CD4-positive, alpha-beta T cell (primary cell): ENCODE measurements at regions of chr6 and their contacts with region 1.

Region 1: GRCh38 chr6:30541515-30542403 is 14.5 kb downstream of the GNL1 start:
- DNase-seq: peak; percentile 69 to 93 (median 76)
- ATAC-seq: peak; percentile 68
- H3K4me3 ChIP-seq: peak overlapping the region; percentile 53
- H3K4me3 Mint-ChIP-seq: peak overlapping the region; percentile 86
- H3K27ac ChIP-seq: peak overlapping the region; percentile 52 to 68
- H3K27ac Mint-ChIP-seq: peak overlapping the region; percentile 91
- H3K4me1 ChIP-seq: peaks cover 33% of the 10 kb centered on the region
- H3K4me1 Mint-ChIP-seq: peaks cover 36% of the 10 kb centered on the region
- H3K27me3 ChIP-seq: no peaks in the 10 kb centered on the region
- H3K27me3 Mint-ChIP-seq: no peaks in the 10 kb centered on the region
- CTCF ChIP-seq: peak; percentile 98

Region 2: DNA sequence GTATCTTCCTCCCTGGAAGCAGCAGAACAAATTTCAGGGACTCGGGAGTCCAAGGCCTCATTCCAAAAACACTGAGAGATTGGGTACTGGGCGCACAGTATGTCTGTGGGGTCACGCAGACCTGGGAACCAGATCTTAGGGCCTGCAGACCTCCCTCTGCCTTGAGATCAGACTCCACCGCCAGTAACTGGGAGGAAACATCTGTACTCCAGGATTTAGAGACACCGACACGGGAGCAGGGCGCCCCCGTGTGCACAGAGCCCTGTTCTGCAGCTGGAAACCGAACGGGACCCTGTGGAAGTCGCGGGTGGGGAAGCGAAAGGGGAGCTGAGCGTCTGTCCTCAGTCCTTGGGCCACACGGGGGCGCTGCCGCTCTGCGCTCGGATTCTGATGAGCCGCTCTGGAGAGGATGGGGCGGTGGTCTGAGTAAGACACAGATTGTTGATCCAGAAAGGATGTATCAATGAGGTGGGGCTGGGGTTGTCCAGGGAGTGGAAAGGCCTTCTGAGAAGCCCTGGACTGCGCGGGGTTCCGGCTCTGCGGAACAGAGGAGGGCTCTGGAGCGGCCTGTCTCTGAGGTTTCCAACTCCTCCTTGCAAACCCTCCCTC is 88.1 kb before region 1 on chr6:
- CTCF ChIA-PET with region 1: interaction called, 14 read pairs
- POLR2A ChIA-PET with region 1: interaction called, 6 read pairs
- intact Hi-C with region 1: no loop called
- DNase-seq: peak; percentile 77 to 95 (median 86)
- ATAC-seq: peak; percentile 76
- H3K4me3 ChIP-seq: peak overlapping the region; percentile 22
- H3K4me3 Mint-ChIP-seq: peak overlapping the region; percentile 67
- H3K27ac ChIP-seq: no peak overlapping the region
- H3K27ac Mint-ChIP-seq: no peak overlapping the region
- H3K4me1 ChIP-seq: peaks cover 44% of the 10 kb centered on the region
- H3K4me1 Mint-ChIP-seq: peaks cover 49% of the 10 kb centered on the region
- H3K27me3 ChIP-seq: peaks cover 64 to 78% of the 10 kb centered on the region in 2 experiments
- H3K27me3 Mint-ChIP-seq: peaks cover 91% of the 10 kb centered on the region
- CTCF ChIP-seq: peak; percentile 56

Region 3: GRCh38 chr6:30489081-30490025 is 52.4 kb before region 1 on chr6 and contains the start of gene HLA-E:
- CTCF ChIA-PET with region 1: interaction called, 144 read pairs
- POLR2A ChIA-PET with region 1: interaction called, 120 read pairs
- intact Hi-C with region 1: no loop called
- DNase-seq: peak; percentile 74 to 99 (median 88)
- ATAC-seq: peak; percentile 80
- H3K4me3 ChIP-seq: peak within 1 kb of the TSS; percentile 83
- H3K4me3 Mint-ChIP-seq: peak within 1 kb of the TSS; percentile 100
- H3K27ac ChIP-seq: peak within 1 kb of the TSS; percentile 95 to 96
- H3K27ac Mint-ChIP-seq: peak within 1 kb of the TSS; percentile 98
- H3K4me1 ChIP-seq: peaks cover 59% of the 10 kb centered on the region
- H3K4me1 Mint-ChIP-seq: peaks cover 62% of the 10 kb centered on the region
- H3K27me3 ChIP-seq: no peaks in the 10 kb centered on the region
- H3K27me3 Mint-ChIP-seq: no peaks in the 10 kb centered on the region
- CTCF ChIP-seq: no peak
- total RNA-seq, gene HLA-E: 1,136 to 1,173 TPM

Region 4: DNA sequence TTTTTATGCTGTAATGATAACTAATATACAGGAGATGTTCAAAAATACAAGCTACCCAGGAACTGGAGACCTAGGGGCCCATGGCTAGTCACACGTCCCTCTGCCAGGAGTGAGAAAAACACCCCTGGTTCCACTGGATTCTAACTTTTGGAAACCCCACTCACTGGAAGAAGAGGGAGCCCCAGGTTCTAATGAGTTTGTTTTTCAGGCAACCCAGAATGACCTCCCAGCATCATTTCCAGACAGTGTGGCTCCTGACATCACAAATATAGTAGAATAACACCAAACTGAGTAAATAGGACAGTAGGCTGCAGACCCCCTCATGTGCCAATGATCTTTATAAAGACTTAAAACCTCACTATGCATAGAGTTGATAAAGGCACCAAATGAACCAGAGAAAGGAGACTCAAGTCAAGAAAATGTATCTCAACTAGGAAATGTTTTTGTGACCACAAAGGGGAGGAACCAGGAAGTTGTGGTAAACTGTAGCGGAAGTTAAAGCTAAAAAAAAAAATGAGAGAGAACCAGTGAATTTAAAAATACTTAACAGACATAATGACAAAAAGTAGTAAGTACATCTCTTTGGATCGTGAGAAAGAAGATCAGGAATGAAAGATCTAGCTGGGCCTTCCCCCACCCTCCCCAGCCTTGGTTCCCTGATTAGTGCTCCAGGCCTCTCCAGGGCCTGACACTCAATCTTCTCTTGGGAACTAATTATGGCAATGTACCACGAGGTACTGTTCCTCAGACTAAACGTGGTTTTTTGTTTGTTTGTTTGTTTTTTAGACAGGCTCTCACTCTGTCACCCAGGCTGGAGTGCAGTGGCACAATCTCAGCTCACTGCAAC is 32.6 kb before region 1 on chr6:
- CTCF ChIA-PET with region 1: interaction called, 27 read pairs
- POLR2A ChIA-PET with region 1: interaction called, 17 read pairs
- intact Hi-C with region 1: no loop called
- DNase-seq: peak in 3 of 14 experiments; percentile 84 to 88 (median 86)
- ATAC-seq: peak; percentile 85
- H3K4me3 ChIP-seq: peak overlapping the region; percentile 36
- H3K4me3 Mint-ChIP-seq: peak overlapping the region; percentile 72
- H3K27ac ChIP-seq: peak overlapping the region; percentile 47 to 65
- H3K27ac Mint-ChIP-seq: peak overlapping the region; percentile 79
- H3K4me1 ChIP-seq: peaks cover 75% of the 10 kb centered on the region
- H3K4me1 Mint-ChIP-seq: peaks cover 62% of the 10 kb centered on the region
- H3K27me3 ChIP-seq: no peaks in the 10 kb centered on the region
- H3K27me3 Mint-ChIP-seq: no peaks in the 10 kb centered on the region
- CTCF ChIP-seq: no peak

Region 5: GRCh38 chr6:30556066-30556905 is 14.5 kb after region 1 on chr6 and contains the start of gene GNL1:
- CTCF ChIA-PET with region 1: interaction called, 26 read pairs
- POLR2A ChIA-PET with region 1: interaction called, 83 read pairs
- intact Hi-C with region 1: loop called in 1 of 2 experiments (anchors 2 kb)
- DNase-seq: peak; percentile 98 to 100 (median 99)
- ATAC-seq: peak; percentile 88
- H3K4me3 ChIP-seq: peak within 1 kb of the TSS; percentile 86
- H3K4me3 Mint-ChIP-seq: peak within 1 kb of the TSS; percentile 98
- H3K27ac ChIP-seq: peak within 1 kb of the TSS; percentile 94 to 97
- H3K27ac Mint-ChIP-seq: peak within 1 kb of the TSS; percentile 97
- H3K4me1 ChIP-seq: peaks cover 27% of the 10 kb centered on the region
- H3K4me1 Mint-ChIP-seq: peaks cover 50% of the 10 kb centered on the region
- H3K27me3 ChIP-seq: no peaks in the 10 kb centered on the region
- H3K27me3 Mint-ChIP-seq: no peaks in the 10 kb centered on the region
- CTCF ChIP-seq: no peak
- total RNA-seq, gene GNL1: 145 to 151 TPM

Region 6: GRCh38 chr6:30600451-30600961 is 58.7 kb after region 1 on chr6:
- CTCF ChIA-PET with region 1: interaction called, 86 read pairs
- POLR2A ChIA-PET with region 1: interaction called, 22 read pairs
- intact Hi-C with region 1: loop called (anchors 1 kb)
- DNase-seq: no peak
- ATAC-seq: no peak
- H3K4me3 ChIP-seq: no peak overlapping the region
- H3K4me3 Mint-ChIP-seq: no peak overlapping the region
- H3K27ac ChIP-seq: peak overlapping the region; percentile 29 to 37
- H3K27ac Mint-ChIP-seq: peak overlapping the region; percentile 58
- H3K4me1 ChIP-seq: peaks cover 14% of the 10 kb centered on the region
- H3K4me1 Mint-ChIP-seq: peaks cover 35% of the 10 kb centered on the region
- H3K27me3 ChIP-seq: no peaks in the 10 kb centered on the region
- H3K27me3 Mint-ChIP-seq: no peaks in the 10 kb centered on the region
- CTCF ChIP-seq: no peak

Region 7: GRCh38 chr6:30717042-30717844 is 175.5 kb after region 1 on chr6 and contains the start of gene MDC1:
- CTCF ChIA-PET with region 1: interaction called, 6 read pairs
- POLR2A ChIA-PET with region 1: interaction called, 8 read pairs
- intact Hi-C with region 1: loop called (anchors 2 to 5 kb)
- DNase-seq: peak; percentile 96 to 100 (median 98)
- ATAC-seq: peak; percentile 73
- H3K4me3 ChIP-seq: peak within 1 kb of the TSS; percentile 81
- H3K4me3 Mint-ChIP-seq: peak within 1 kb of the TSS; percentile 95
- H3K27ac ChIP-seq: peak within 1 kb of the TSS; percentile 86 to 90
- H3K27ac Mint-ChIP-seq: peak within 1 kb of the TSS; percentile 96
- H3K4me1 ChIP-seq: peaks cover 42% of the 10 kb centered on the region
- H3K4me1 Mint-ChIP-seq: peaks cover 45% of the 10 kb centered on the region
- H3K27me3 ChIP-seq: no peaks in the 10 kb centered on the region
- H3K27me3 Mint-ChIP-seq: no peaks in the 10 kb centered on the region
- CTCF ChIP-seq: peak; percentile 45
- total RNA-seq, gene MDC1: 50.5 to 56.8 TPM